CD8-positive, alpha-beta T cell (primary cell): ENCODE measurements at regions of chr2 and their contacts with region 1.

Region 1: GRCh38 chr2:195636890-195637289 is 20.1 kb upstream of the SLC39A10 start:
- DNase-seq: no peak
- ATAC-seq: no peak
- H3K4me3 ChIP-seq: no peak overlapping the region
- H3K4me3 Mint-ChIP-seq: no peak overlapping the region
- H3K27ac ChIP-seq: no peak overlapping the region
- H3K27ac Mint-ChIP-seq: no peak overlapping the region
- H3K4me1 ChIP-seq: no peaks in the 10 kb centered on the region
- H3K4me1 Mint-ChIP-seq: peaks cover 8% of the 10 kb centered on the region
- H3K27me3 ChIP-seq: no peaks in the 10 kb centered on the region
- H3K27me3 Mint-ChIP-seq: no peaks in the 10 kb centered on the region
- CTCF ChIP-seq: no peak

Region 2: GRCh38 chr2:195364015-195364965 is 272.6 kb before region 1 on chr2:
- CTCF ChIA-PET with region 1: no interaction called
- POLR2A ChIA-PET with region 1: no interaction called
- intact Hi-C with region 1: no loop called
- DNase-seq: no peak
- ATAC-seq: no peak
- H3K4me3 ChIP-seq: no peak overlapping the region
- H3K4me3 Mint-ChIP-seq: no peak overlapping the region
- H3K27ac ChIP-seq: no peak overlapping the region
- H3K27ac Mint-ChIP-seq: no peak overlapping the region
- H3K4me1 ChIP-seq: no peaks in the 10 kb centered on the region
- H3K4me1 Mint-ChIP-seq: peaks cover 2% of the 10 kb centered on the region
- H3K27me3 ChIP-seq: no peaks in the 10 kb centered on the region
- H3K27me3 Mint-ChIP-seq: no peaks in the 10 kb centered on the region
- CTCF ChIP-seq: no peak

Region 3: DNA sequence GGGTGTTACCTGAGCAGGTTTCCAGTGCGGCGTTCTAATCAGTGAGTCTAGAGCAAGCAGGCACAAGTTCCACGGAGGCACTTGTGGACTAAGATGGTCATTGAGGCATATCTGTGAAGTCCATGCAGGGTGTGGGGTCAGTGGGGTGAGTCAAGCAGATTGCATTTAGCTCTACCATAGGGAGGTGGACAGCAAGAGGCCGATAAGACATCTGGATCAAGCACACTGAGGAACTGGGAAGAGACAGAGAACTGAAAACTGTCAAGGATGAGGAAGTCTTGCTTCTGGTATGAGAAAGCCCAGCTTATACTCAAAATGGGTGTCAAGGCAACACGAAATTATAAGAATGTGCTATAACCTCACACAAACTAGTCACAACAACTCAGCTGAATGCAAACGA is 41.1 kb before region 1 on chr2:
- CTCF ChIA-PET with region 1: no interaction called
- POLR2A ChIA-PET with region 1: interaction called, 3 read pairs
- intact Hi-C with region 1: loop called in 1 of 2 experiments (anchors 5 kb)
- DNase-seq: no peak
- ATAC-seq: no peak
- H3K4me3 ChIP-seq: no peak overlapping the region
- H3K4me3 Mint-ChIP-seq: no peak overlapping the region
- H3K27ac ChIP-seq: no peak overlapping the region
- H3K27ac Mint-ChIP-seq: no peak overlapping the region
- H3K4me1 ChIP-seq: no peaks in the 10 kb centered on the region
- H3K4me1 Mint-ChIP-seq: peaks cover 13% of the 10 kb centered on the region
- H3K27me3 ChIP-seq: no peaks in the 10 kb centered on the region
- H3K27me3 Mint-ChIP-seq: no peaks in the 10 kb centered on the region
- CTCF ChIP-seq: no peak

Region 4: DNA sequence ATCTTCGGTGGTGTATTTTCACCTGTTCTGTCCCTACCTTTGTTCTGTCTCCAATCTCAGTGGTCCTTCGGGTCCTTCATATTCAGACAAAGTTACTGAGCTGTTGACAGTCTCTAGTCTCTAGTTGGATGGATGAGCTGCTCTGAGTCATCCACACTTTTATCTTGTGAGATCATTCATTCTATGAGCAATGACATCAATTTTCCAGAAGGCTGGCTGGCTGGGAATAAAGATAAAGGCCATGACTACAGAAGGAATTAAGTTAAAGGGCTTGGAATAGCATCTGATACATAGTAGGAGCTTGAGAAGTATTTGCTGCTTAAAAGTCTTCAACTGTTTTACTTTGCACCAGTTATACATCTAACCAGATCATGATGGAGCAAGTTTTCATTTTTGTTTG is 23.0 kb before region 1 on chr2:
- CTCF ChIA-PET with region 1: interaction called, 3 read pairs
- POLR2A ChIA-PET with region 1: no interaction called
- intact Hi-C with region 1: loop called in 1 of 2 experiments (anchors 1 kb)
- DNase-seq: no peak
- ATAC-seq: no peak
- H3K4me3 ChIP-seq: no peak overlapping the region
- H3K4me3 Mint-ChIP-seq: no peak overlapping the region
- H3K27ac ChIP-seq: no peak overlapping the region
- H3K27ac Mint-ChIP-seq: no peak overlapping the region
- H3K4me1 ChIP-seq: no peaks in the 10 kb centered on the region
- H3K4me1 Mint-ChIP-seq: peaks cover 16% of the 10 kb centered on the region
- H3K27me3 ChIP-seq: no peaks in the 10 kb centered on the region
- H3K27me3 Mint-ChIP-seq: no peaks in the 10 kb centered on the region
- CTCF ChIP-seq: no peak

Region 5: GRCh38 chr2:195674491-195675221 is 37.8 kb after region 1 on chr2:
- CTCF ChIA-PET with region 1: no interaction called
- POLR2A ChIA-PET with region 1: no interaction called
- intact Hi-C with region 1: no loop called
- DNase-seq: no peak
- ATAC-seq: no peak
- H3K4me3 ChIP-seq: no peak overlapping the region
- H3K4me3 Mint-ChIP-seq: no peak overlapping the region
- H3K27ac ChIP-seq: no peak overlapping the region
- H3K27ac Mint-ChIP-seq: no peak overlapping the region
- H3K4me1 ChIP-seq: peaks cover 14% of the 10 kb centered on the region
- H3K4me1 Mint-ChIP-seq: peaks cover 57% of the 10 kb centered on the region
- H3K27me3 ChIP-seq: no peaks in the 10 kb centered on the region
- H3K27me3 Mint-ChIP-seq: no peaks in the 10 kb centered on the region
- CTCF ChIP-seq: no peak